GM12878 (cell line): ENCODE measurements at regions of chr12 and their contacts with region 1.

Region 1: GRCh38 chr12:74365178-74365964 is 172.3 kb upstream of the ATXN7L3B start:
- DNase-seq: no peak
- ATAC-seq: peak; percentile 96
- H3K4me3 ChIP-seq: no peak overlapping the region
- H3K27ac ChIP-seq: no peak overlapping the region
- H3K4me1 ChIP-seq: no peaks in the 10 kb centered on the region
- H3K27me3 ChIP-seq: no peaks in the 10 kb centered on the region
- CTCF ChIP-seq: peak; percentile 50 to 72 (median 52)
- EP300 ChIP-seq: no peak
- POLR2A ChIP-seq: no peak
- RAD21 ChIP-seq: peak; percentile 74

Region 2: DNA sequence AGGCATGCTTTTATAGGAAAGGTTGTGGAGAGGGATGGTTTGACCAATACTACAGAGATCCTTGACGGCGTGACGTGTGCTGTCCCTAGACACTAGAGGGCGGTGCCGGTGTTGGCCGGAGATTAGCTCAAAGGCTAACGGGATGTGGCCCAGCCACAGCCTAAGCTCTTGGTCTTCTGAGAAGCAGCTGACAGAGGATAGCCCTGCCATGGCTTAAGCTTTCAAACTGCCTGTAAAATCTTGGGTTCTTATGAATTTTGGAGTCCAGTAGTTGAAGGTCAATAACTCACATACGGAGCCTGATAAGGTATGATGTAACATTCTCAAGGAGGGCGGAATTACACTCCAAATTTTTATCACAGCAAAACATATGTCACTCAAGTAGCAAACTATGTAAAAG is 343.4 kb before region 1 on chr12:
- CTCF ChIA-PET with region 1: interaction called, 3 read pairs
- POLR2A ChIA-PET with region 1: no interaction called
- RAD21 ChIA-PET with region 1: no interaction called
- SMC1A ChIA-PET with region 1: no interaction called
- in situ Hi-C with region 1: no loop called
- intact Hi-C with region 1: loop called (anchors 1 kb)
- DNase-seq: no peak
- ATAC-seq: peak; percentile 99
- H3K4me3 ChIP-seq: no peak overlapping the region
- H3K27ac ChIP-seq: no peak overlapping the region
- H3K4me1 ChIP-seq: no peaks in the 10 kb centered on the region
- H3K27me3 ChIP-seq: no peaks in the 10 kb centered on the region
- CTCF ChIP-seq: peak; percentile 60 to 72 (median 72)
- EP300 ChIP-seq: no peak
- POLR2A ChIP-seq: no peak
- RAD21 ChIP-seq: peak; percentile 49

Region 3: GRCh38 chr12:74111688-74112360 is 253.5 kb before region 1 on chr12:
- CTCF ChIA-PET with region 1: no interaction called
- POLR2A ChIA-PET with region 1: no interaction called
- RAD21 ChIA-PET with region 1: no interaction called
- SMC1A ChIA-PET with region 1: no interaction called
- in situ Hi-C with region 1: no loop called
- intact Hi-C with region 1: loop called (anchors 1 kb)
- DNase-seq: no peak
- ATAC-seq: peak; percentile 89
- H3K4me3 ChIP-seq: no peak overlapping the region
- H3K27ac ChIP-seq: no peak overlapping the region
- H3K4me1 ChIP-seq: no peaks in the 10 kb centered on the region
- H3K27me3 ChIP-seq: no peaks in the 10 kb centered on the region
- CTCF ChIP-seq: peak in 2 of 3 experiments; percentile 24 to 52; a peak in 3 of 6 replicates
- EP300 ChIP-seq: no peak
- POLR2A ChIP-seq: no peak
- RAD21 ChIP-seq: peak; percentile 55